Kidney (tissue), 22 donors: ENCODE measurements at regions of chr19 and their contacts with region 1.

Region 1: GRCh38 chr19:56170261-56170660 is 5.5 kb upstream of the GALP start:
- DNase-seq: peak in 1 of 5 donors; percentile 16
- H3K4me3 ChIP-seq: no peak overlapping the region
- H3K27ac ChIP-seq: no peak overlapping the region
- H3K4me1 ChIP-seq: no peaks in the 10 kb centered on the region
- H3K27me3 ChIP-seq: no peaks in the 10 kb centered on the region
- CTCF ChIP-seq: no peak

Region 2: GRCh38 chr19:56076498-56076897 is 93.8 kb before region 1 on chr19:
- intact Hi-C with region 1: loop called (anchors 10 kb)
- DNase-seq: peak in 3 of 5 donors; percentile 63 to 73 (median 68)
- H3K4me3 ChIP-seq: no peak overlapping the region
- H3K27ac ChIP-seq: no peak overlapping the region
- H3K4me1 ChIP-seq: peaks cover 0 to 8% (median 0%) of the 10 kb centered on the region in 3 donors
- H3K27me3 ChIP-seq: no peaks in the 10 kb centered on the region
- CTCF ChIP-seq: peak; percentile 85

Region 3: DNA sequence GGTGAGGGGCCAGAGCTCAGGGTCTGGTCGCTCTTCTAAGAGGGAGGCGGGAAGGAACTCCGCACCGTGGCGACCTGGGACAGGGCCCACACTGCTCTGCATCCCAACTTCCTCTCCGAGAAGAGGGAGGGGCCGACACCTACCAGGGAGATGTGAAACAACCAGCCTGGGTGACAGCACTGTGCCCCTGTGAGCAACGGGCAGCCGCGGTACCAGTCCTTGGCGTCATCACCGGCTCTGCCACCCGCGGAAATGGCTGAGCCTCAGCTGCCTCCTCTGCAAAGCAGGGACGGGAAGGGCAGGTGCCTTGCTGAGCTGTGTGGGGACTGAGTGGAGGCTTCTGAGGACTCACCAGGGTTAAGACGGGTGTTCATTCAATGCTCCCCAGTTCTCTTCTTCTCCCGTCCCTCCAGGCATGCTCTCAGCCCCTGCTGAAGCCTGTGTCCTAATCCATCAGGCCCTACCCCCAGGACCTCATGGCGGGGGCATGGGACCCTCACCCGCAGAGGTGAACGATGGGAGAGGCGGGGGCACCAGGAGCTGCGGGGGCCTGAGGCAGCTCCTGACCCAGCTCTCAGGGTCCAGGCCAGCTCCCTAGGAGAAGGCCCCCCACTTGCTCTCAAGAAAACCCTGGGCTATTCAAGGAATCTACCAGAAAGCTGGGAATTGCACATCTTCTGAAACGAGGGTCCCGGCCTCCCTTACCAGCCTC is 58.5 kb before region 1 on chr19:
- intact Hi-C with region 1: no loop called
- DNase-seq: peak in 2 of 5 donors; percentile 27 to 52
- H3K4me3 ChIP-seq: no peak overlapping the region
- H3K27ac ChIP-seq: peak overlapping the region; percentile 53 to 60
- H3K4me1 ChIP-seq: peaks cover 0 to 52% (median 30%) of the 10 kb centered on the region in 3 donors
- H3K27me3 ChIP-seq: no peaks in the 10 kb centered on the region
- CTCF ChIP-seq: no peak